PC-3 (cell line): ENCODE measurements at regions of chr3 and their contacts with region 1.

Region 1: DNA sequence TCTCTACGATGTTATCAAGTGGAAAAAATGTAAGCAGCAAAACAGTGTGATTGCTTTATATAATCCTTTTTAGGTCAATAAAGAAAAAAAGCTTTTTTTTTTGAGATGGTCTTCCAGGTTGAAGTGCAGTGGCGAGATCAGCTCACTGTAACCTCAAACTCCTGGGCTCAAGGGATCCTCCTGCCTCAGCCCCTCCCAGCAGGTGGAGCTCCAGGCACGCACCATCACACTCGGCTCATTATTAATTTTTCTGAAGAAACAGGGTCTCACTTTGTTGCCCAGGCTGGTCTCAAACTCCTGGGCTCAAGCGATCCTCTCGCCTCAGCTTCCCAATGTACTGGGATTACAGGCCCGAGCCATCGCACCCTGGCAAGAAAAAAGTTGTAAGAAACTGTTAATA is 17.3 kb downstream of the RNF168 start:
- DNase-seq: peak; percentile 28
- ATAC-seq: no peak
- H3K4me3 ChIP-seq: no peak overlapping the region
- H3K27ac ChIP-seq: no peak overlapping the region
- H3K4me1 ChIP-seq: no peaks in the 10 kb centered on the region
- H3K27me3 ChIP-seq: no peaks in the 10 kb centered on the region
- CTCF ChIP-seq: peak; percentile 67

Region 2: DNA sequence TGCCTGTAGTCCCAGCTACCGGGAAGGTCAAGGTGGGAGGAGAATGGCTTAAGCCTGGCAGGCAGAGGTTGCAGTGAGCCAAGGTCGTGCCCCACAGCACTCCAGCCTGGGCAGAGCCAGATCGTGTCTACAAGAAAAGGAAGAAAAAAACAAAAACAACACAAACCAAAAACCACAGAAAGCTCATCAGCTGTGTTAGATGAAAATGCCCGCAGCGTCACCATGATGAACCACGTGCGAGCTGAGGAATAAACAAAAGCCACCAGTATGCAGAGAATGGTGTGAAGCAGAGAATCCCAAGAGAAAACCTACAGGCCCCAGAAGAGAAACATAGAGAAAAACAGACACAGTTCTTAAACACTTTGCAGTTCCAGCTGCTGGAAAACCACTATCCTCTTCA is 128.4 kb before region 1 on chr3:
- CTCF ChIA-PET with region 1: interaction called, 12 read pairs
- POLR2A ChIA-PET with region 1: no interaction called
- intact Hi-C with region 1: no loop called
- DNase-seq: no peak
- ATAC-seq: no peak
- H3K4me3 ChIP-seq: no peak overlapping the region
- H3K27ac ChIP-seq: no peak overlapping the region
- H3K4me1 ChIP-seq: no peaks in the 10 kb centered on the region
- H3K27me3 ChIP-seq: no peaks in the 10 kb centered on the region
- CTCF ChIP-seq: no peak

Region 3: GRCh38 chr3:196502775-196503195 is 16.5 kb after region 1 on chr3:
- CTCF ChIA-PET with region 1: no interaction called
- POLR2A ChIA-PET with region 1: interaction called, 3 read pairs
- intact Hi-C with region 1: loop called (anchors 2 kb)
- DNase-seq: peak; percentile 94
- ATAC-seq: peak; percentile 50
- H3K4me3 ChIP-seq: peak overlapping the region; percentile 82
- H3K27ac ChIP-seq: peak overlapping the region; percentile 80
- H3K4me1 ChIP-seq: peaks cover 19% of the 10 kb centered on the region
- H3K27me3 ChIP-seq: no peaks in the 10 kb centered on the region
- CTCF ChIP-seq: no peak

Region 4: DNA sequence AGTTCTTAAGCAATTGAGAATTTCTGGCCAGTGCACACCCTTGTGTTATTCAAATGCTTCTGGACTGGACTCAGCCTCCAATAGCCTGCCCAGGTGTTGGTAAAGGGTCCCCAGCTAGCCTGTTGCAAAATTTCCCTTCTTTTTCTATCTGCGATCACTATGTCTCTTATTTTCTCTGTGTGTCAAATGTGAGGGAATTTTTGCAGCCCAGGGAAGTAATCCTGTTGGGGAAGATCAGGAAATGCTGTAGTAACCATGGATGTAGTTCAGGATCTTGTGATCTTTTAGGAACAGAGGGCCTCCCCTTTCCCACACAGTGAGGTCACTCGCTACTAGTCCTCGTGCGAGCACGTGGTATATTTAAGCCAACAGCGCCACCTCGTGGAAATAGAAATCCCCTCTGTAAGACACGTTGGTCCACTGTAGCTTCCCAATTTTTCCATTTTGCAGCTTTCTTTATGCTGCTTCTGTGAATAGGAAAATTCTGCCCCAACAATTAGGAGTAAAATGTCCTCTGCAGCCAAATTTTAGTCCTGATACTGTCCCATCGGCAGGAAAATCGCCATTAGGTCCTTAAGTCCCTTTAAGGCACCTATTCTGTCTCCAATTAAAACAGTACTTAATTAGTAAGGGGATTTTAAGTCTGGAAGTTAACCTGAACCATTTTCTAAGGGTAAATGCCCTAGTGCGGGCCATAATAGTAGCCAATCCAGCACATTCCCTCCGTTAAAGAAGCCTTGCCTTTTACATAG is 32.9 kb after region 1 on chr3:
- CTCF ChIA-PET with region 1: interaction called, 4 read pairs
- POLR2A ChIA-PET with region 1: no interaction called
- intact Hi-C with region 1: loop called (anchors 2 kb)
- DNase-seq: peak; percentile 86
- ATAC-seq: peak; percentile 71
- H3K4me3 ChIP-seq: no peak overlapping the region
- H3K27ac ChIP-seq: no peak overlapping the region
- H3K4me1 ChIP-seq: no peaks in the 10 kb centered on the region
- H3K27me3 ChIP-seq: no peaks in the 10 kb centered on the region
- CTCF ChIP-seq: peak; percentile 74